ENCODE measurements at regions of chr1 and their contacts with region 1.

Region 1: DNA sequence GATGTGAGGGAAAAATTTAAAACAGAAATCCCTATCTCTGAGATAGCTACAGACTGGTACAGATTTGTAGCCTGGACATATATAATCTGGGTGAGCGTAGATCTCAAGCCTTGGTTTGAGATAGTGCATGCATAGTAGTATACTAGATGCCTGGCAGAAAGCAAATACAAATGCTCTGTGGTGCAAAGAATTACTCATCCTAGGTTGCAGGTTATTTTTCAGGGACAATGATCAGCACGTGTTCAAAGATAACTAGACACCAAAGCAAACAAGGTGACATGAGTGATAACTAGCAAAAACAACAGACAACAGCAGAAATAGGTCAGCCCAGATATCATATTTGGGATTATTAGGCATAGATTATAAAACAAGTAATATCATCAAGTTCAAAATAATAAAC is 292.5 kb downstream of the HLX start:
- DNase-seq: no peak
- H3K4me3 ChIP-seq: no peak overlapping the region
- H3K27me3 ChIP-seq: no peaks in the 10 kb centered on the region
- CTCF ChIP-seq: no peak

Region 2: GRCh38 chr1:220637759-220638158 is 534.0 kb before region 1 on chr1:
- CTCF ChIA-PET with region 1: no interaction called
- POLR2A ChIA-PET with region 1: interaction called, 12 read pairs
- DNase-seq: no peak
- H3K4me3 ChIP-seq: no peak overlapping the region
- H3K27me3 ChIP-seq: no peaks in the 10 kb centered on the region
- CTCF ChIP-seq: no peak

Region 3: DNA sequence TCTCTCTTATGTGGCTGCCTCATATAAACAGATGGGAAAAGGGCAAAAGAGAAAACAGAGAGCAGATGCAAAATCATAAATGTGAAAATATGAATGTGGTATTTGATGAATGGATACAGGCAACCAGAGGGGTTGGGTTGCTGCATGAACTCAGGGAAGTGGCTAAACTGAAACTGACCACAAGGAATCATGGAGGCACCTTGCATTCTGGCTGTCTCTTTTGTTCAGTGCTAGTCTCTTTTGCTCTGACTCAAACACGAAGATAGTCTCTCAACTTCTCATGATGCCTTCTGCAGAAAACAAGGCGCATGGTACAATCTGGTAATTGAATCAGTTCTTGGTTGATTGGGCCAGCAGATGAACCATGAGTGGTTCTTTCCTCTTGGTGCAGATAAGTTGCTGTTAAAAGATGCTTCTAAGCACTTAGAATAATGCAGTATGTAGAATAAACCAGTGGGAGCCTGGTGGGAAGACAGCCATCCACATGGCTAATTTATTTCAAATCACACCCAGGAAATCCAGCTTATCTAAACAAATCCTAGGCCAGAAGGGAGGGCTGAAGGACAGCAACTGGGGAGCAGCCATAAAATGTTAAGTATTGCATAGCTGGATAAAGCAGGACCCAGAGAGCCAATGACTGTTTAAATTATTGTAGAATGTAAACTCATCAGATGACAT is 228.3 kb before region 1 on chr1:
- CTCF ChIA-PET with region 1: no interaction called
- POLR2A ChIA-PET with region 1: no interaction called
- DNase-seq: no peak
- H3K4me3 ChIP-seq: no peak overlapping the region
- H3K27me3 ChIP-seq: no peaks in the 10 kb centered on the region
- CTCF ChIP-seq: no peak

Region 4: DNA sequence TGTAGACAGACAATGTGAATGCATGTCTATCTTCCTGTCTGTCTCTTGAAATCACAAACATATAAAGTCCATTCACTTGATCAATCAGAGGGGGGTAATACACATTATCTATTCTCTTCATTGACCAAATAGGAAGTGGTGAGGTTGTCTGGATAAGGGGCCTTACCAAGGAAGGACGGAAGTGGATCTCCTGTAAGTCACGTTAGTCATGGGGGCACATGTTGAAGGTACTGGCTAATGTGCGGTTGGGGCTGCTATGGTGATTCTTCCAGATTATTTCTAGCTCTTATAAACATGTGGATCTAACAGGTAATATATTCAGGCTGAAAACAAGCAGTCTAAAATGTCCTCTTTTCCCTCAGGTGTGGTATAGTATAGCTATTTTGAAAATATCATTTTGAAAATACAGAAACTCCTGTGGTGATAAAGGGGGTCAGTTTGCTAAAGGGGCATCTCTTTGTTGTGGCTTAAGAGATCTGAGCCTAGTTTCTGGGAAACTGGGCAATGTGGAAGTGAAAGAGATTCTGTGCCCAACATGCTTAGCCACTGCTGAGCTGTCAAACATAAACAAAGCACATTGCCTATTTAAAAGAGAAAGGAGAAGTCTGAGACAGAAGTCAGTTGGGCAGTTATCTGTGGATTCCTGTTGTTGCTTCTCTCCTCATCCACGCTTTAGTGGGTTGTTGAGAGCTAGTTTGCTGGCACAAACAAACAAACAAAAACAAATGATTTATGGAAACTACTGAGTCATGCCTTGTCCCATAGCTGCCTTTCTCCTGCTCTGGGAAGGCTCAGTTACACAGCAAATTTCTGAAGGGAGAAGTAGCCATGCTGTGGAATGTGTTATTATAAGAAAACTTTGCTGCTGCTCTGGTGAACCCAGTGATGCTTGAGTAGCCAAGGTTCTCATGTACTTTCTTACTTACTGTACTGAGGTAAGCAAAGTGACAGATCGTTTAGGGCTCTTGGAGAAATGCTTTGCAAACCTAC is 125.6 kb before region 1 on chr1:
- CTCF ChIA-PET with region 1: no interaction called
- POLR2A ChIA-PET with region 1: no interaction called
- DNase-seq: no peak
- H3K4me3 ChIP-seq: no peak overlapping the region
- H3K27me3 ChIP-seq: no peaks in the 10 kb centered on the region
- CTCF ChIP-seq: no peak